Kidney (tissue), 22 donors: ENCODE measurements at regions of chr3 and their contacts with region 1.

Region 1: GRCh38 chr3:191388823-191389222 is 58.5 kb upstream of the UTS2B start:
- DNase-seq: no peak
- H3K4me3 ChIP-seq: no peak overlapping the region
- H3K27ac ChIP-seq: no peak overlapping the region
- H3K4me1 ChIP-seq: no peaks in the 10 kb centered on the region
- H3K27me3 ChIP-seq: no peaks in the 10 kb centered on the region
- CTCF ChIP-seq: no peak

Region 2: DNA sequence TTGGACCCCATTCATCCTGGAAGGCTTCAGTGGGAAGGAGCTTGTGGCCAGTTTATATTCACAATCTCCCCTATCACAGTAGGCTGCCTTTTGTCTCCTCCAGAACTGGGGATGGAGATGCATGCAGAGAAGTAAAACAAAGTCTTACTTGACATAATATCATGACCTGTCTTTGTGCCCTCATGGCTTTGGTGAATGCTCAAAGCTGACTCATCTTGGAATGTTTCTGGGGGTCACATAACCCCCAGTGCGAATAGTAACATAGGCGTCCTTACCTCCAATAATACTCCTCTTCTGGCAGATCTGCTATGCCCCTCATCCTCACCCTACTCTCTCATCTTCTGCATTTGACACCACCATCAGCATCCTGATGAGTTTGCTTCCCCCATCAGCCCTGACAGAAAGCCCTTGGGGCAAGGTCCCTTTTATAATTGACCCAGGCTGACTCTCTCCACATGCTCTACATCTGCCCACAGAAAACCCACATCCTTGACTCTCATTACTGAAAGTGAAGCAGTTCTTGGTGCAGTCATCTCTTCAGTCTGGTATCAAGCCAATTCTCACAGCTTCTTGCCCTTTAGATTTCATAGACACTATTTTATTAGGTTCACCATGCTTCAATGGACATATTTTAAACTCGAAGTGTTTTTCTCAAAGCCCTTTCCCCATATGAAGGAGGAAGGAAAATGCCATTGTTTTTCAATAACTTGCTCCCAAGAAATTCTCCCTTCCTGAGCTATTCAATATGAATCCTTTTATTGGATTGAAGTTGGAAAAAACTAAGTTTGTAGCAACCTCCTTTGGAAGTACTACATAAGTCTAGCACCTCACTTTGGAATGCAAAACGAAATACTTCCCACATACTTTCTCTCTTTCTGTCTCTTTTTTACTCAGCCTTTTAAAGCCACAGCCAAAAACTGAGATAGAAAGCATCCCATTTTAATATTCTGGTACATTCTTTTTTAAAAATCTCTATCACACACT is 153.2 kb before region 1 on chr3:
- intact Hi-C with region 1: loop called (anchors 10 kb)
- DNase-seq: peak in 1 of 5 donors; percentile 14
- H3K4me3 ChIP-seq: no peak overlapping the region
- H3K27ac ChIP-seq: no peak overlapping the region
- H3K4me1 ChIP-seq: no peaks in the 10 kb centered on the region
- H3K27me3 ChIP-seq: no peaks in the 10 kb centered on the region
- CTCF ChIP-seq: no peak

Region 3: GRCh38 chr3:191944835-191945234 is 556.0 kb after region 1 on chr3:
- intact Hi-C with region 1: no loop called
- DNase-seq: no peak
- H3K4me3 ChIP-seq: no peak overlapping the region
- H3K27ac ChIP-seq: no peak overlapping the region
- H3K4me1 ChIP-seq: no peaks in the 10 kb centered on the region
- H3K27me3 ChIP-seq: no peaks in the 10 kb centered on the region
- CTCF ChIP-seq: no peak